ENCODE measurements at regions of chr3 and their contacts with region 1.

Region 1: DNA sequence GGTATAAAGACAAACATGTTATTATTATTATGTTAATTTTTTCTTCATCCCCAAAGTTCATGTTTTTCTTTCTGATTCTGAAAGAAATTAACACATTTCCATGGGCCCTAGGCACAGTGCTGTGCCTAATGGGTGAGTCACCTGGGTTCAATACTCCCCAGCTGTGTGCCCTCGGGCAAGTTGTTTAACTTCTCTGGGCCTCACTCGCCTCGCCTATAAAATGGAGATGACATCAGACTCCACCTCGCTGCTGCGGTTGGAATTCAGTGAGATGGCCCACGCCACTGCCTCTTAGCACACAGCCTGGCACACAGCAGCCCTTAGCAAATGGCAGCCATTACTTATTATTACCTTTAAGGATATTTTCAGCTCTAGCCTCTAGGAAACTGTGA is 22.6 kb downstream of the DNASE1L3 start:
- DNase-seq: no peak
- H3K4me3 ChIP-seq: no peak overlapping the region
- H3K27ac ChIP-seq: no peak overlapping the region
- H3K4me1 ChIP-seq: no peaks in the 10 kb centered on the region
- CTCF ChIP-seq: no peak

Region 2: GRCh38 chr3:58217209-58217811 is 29.1 kb after region 1 on chr3:
- CTCF ChIA-PET with region 1: interaction called, 10 read pairs
- POLR2A ChIA-PET with region 1: interaction called, 4 read pairs
- intact Hi-C with region 1: loop called (anchors 1 kb)
- DNase-seq: peak; percentile 84
- H3K4me3 ChIP-seq: peak overlapping the region; percentile 24
- H3K27ac ChIP-seq: no peak overlapping the region
- H3K4me1 ChIP-seq: peaks cover 22% of the 10 kb centered on the region
- CTCF ChIP-seq: peak; percentile 92

Region 3: GRCh38 chr3:58237238-58237940 is 49.2 kb after region 1 on chr3 and contains the start of gene ABHD6:
- CTCF ChIA-PET with region 1: interaction called, 5 read pairs
- POLR2A ChIA-PET with region 1: no interaction called
- intact Hi-C with region 1: loop called (anchors 5 kb)
- DNase-seq: peak; percentile 86
- H3K4me3 ChIP-seq: peak within 1 kb of the TSS; percentile 80
- H3K27ac ChIP-seq: peak within 1 kb of the TSS; percentile 50
- H3K4me1 ChIP-seq: peaks cover 25% of the 10 kb centered on the region
- CTCF ChIP-seq: peak; percentile 59
- total RNA-seq, gene ABHD6: 5.8 TPM in 2 replicates

Region 4: DNA sequence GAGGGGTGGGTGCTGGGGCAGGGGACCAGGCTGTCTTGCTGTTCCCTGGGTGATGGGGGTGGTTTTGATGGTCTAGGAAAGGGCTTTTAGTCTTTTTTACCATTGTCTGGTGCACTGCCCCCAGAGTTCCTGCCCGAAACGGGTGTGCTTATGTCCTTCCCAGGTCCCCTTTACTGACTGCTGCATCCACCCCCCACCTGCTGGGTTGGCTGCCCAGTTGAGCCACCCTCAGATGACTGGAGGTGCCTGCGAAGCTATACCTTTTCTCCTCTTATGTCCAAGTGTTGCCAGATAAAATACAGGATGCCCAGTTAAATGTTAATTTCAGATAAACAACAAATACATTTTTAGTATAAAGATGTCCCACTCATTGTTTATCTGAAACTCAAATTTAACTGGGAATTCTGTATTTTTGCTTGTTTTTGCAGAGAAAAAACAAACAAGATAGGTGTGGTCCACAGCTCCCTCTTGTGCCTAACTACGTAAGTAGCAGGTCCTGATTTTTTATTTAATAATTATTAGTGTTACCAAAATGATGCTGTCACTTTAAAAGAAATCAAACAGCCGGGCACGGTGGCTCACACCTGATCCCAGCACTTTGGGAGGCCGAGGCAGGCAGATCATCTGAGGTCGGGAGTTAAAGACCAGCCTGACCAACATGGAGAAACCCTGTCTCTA is 111.8 kb after region 1 on chr3:
- CTCF ChIA-PET with region 1: interaction called, 4 read pairs
- POLR2A ChIA-PET with region 1: interaction called, 7 read pairs
- intact Hi-C with region 1: loop called (anchors 1 kb)
- DNase-seq: peak; percentile 45
- H3K4me3 ChIP-seq: no peak overlapping the region
- H3K27ac ChIP-seq: no peak overlapping the region
- H3K4me1 ChIP-seq: no peaks in the 10 kb centered on the region
- CTCF ChIP-seq: peak; percentile 87

Region 5: DNA sequence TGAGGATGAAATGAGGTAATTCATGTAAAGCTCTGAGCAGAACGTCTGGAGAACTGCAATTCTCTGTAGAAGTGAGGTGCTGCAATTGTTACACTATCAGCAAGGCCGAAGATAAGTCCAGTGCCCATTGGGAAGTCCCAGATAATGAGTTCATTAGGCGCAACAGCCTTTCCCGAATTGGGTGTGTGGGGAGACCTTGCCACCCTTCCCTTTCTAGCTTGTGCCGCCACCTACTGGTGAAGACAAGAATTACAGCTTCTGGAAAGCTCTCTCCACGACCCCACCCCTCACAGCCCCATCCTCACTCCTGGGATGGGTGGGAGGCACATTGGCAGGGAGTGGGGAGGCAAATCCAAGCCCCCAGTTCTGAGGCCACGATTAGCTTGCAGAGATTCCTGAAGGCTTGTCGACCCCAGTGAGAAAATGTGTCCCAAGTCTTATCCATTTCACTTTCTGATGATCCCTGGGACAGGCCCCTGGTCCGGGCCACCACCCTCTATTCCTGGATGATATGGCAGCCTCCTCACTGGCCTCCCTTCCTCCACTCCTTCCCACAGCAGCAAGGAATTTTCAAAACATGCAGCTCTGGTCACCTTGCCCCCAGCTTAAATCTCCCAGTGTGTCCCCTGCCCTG is 442.0 kb after region 1 on chr3:
- CTCF ChIA-PET with region 1: no interaction called
- POLR2A ChIA-PET with region 1: no interaction called
- intact Hi-C with region 1: loop called (anchors 10 kb)
- DNase-seq: peak; percentile 60
- H3K4me3 ChIP-seq: no peak overlapping the region
- H3K27ac ChIP-seq: no peak overlapping the region
- H3K4me1 ChIP-seq: no peaks in the 10 kb centered on the region
- CTCF ChIP-seq: peak; percentile 89

Measured in OCI-LY7 (cell line).